H1 (cell line): ENCODE measurements at regions of chr7 and their contacts with region 1.

Region 1: DNA sequence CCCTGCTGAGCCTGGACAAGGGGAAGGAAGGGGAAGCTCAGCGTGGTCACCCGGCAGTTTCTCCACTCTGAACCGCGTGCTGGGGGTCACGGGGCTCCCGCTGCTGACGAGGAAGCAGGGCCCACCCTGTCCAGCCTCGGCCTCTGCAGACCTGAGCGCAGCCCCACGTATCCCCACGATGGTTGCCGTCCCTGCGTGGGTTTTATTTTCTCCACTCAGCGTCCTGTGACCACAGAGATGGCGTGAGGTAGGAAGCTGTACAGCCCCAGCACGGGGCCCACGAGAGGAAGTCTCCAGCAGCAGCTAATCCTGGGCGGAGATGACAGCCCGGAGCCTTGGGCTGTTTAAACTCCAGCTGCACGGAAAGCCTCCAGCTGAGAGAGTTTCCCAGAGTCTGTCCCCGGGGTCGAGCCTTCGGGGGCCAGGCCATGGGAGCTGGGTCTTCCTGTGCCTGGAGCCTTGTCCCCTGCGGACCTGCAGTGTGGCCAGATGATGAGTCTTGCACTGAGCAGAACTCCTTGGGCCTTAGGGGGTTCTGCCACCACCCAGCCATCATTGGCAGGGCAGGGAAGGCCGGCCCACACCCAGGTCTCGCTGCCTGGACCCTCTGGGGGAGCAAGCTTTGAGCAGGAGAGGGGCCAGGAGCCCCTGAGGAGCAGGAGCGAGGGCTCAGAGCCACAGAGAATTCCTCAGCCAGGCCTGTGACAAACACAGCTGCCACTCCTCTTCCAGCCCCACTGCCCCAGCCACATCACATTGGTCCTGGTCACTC is 72.8 kb upstream of the FAM20C start:
- DNase-seq: no peak
- H3K4me3 ChIP-seq: no peak overlapping the region
- H3K27ac ChIP-seq: no peak overlapping the region
- H3K4me1 ChIP-seq: peaks cover 3 to 32% (median 17%) of the 10 kb centered on the region in 4 experiments
- H3K27me3 ChIP-seq: peaks cover 0 to 6% (median under 1%) of the 10 kb centered on the region in 4 experiments; a peak in 3 of 7 replicates
- CTCF ChIP-seq: no peak
- EP300 ChIP-seq: no peak
- POLR2A ChIP-seq: no peak
- RAD21 ChIP-seq: no peak

Region 2: GRCh38 chr7:89232-90019 is 30.2 kb before region 1 on chr7:
- CTCF ChIA-PET with region 1: interaction called, 16 read pairs
- POLR2A ChIA-PET with region 1: interaction called, 5 read pairs
- DNase-seq: peak in 1 of 2 experiments; percentile 43
- H3K4me3 ChIP-seq: no peak overlapping the region
- H3K27ac ChIP-seq: no peak overlapping the region
- H3K4me1 ChIP-seq: peaks cover 11 to 25% (median 15%) of the 10 kb centered on the region in 4 experiments
- H3K27me3 ChIP-seq: peaks cover 0 to 2% (median 0%) of the 10 kb centered on the region in 4 experiments; a peak in 1 of 7 replicates
- CTCF ChIP-seq: no peak
- EP300 ChIP-seq: no peak
- POLR2A ChIP-seq: no peak
- RAD21 ChIP-seq: no peak

Region 3: GRCh38 chr7:95180-95862 is 24.3 kb before region 1 on chr7:
- CTCF ChIA-PET with region 1: interaction called, 16 read pairs
- POLR2A ChIA-PET with region 1: interaction called, 16 read pairs
- DNase-seq: no peak
- H3K4me3 ChIP-seq: peak overlapping the region in 3 of 4 experiments; percentile 10 to 49 (median 35); a peak in 6 of 8 replicates
- H3K27ac ChIP-seq: peak overlapping the region; percentile 62; the same call in 1 of the 2 replicates
- H3K4me1 ChIP-seq: peaks cover 18 to 35% (median 27%) of the 10 kb centered on the region in 4 experiments
- H3K27me3 ChIP-seq: no peaks in the 10 kb centered on the region
- CTCF ChIP-seq: no peak
- EP300 ChIP-seq: no peak
- POLR2A ChIP-seq: no peak
- RAD21 ChIP-seq: no peak